Activated CD8-positive, alpha-beta T cell treated with anti-CD3 and anti-CD28 coated beads, Interleukin-2, amount 10 ng/mL, durations not matched to agents 7 days and 5 days (primary cell): ENCODE measurements at regions of chr11 and their contacts with region 1.

Region 1: DNA sequence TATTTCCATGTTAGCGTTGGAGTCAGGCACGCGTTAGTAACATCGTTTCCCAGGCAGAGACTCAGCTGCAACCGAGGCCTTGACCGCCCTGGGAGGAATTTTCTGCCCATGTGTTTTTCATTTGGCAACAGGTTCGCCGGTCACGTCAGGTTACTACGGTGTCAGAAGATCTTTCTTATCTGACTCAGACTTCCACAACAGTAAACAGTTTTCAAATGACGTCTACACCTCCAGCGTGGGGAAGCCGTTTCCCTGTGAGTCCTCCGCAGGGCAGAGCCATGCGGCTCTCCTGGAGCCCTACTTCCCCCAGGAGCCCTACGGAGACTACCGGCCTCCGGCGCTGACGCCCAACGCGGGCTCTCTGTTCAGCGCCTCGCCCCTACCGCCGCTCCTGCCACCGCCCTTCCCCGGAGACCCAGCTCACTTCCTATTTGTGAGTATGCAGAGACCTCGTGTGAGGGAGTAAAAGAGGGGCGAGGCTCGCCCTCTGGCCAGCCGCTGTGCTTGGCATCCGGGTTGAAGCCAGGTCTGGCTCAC is 14.3 kb upstream of the POU2AF3 start:
- DNase-seq: no peak
- ATAC-seq: no peak
- H3K4me3 Mint-ChIP-seq: no peak overlapping the region
- H3K27ac Mint-ChIP-seq: no peak overlapping the region
- H3K4me1 Mint-ChIP-seq: no peaks in the 10 kb centered on the region
- H3K27me3 Mint-ChIP-seq: peaks cover 3% of the 10 kb centered on the region

Region 2: DNA sequence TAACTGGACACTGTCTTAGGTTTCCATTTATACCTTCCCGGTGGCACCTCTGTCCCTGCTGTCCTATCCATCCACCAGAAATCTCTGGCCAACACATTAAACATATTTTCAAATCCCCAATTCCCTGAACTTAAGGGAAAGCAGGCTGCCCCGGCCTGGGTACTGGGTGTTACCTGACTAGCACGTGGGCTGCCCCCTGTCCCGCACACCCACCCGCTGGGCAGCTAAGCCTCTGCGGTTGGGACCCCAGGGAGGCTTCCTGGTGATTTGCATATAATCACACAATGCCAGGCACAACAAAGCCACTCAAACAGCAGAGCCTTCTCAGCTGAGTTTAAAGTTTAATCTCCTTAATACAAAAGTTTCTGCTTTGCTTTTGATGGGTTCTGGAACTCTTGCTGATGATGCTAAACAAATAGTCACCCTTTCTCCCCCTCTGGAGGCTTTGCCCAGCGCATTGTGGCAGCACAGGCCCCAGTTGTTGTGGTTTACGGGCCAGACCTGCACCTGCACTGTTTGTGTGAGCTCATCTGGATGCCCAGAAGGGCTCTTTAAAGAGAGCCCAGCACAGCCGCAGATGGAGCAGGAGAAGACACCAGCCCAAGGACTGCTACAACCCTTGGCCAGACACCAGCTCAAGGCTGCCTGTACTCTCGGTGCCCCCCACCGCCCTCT is 155.0 kb after region 1 on chr11:
- CTCF ChIA-PET with region 1: interaction called, 13 read pairs
- POLR2A ChIA-PET with region 1: no interaction called
- DNase-seq: no peak
- ATAC-seq: no peak
- H3K4me3 Mint-ChIP-seq: no peak overlapping the region
- H3K27ac Mint-ChIP-seq: no peak overlapping the region
- H3K4me1 Mint-ChIP-seq: peaks cover 20% of the 10 kb centered on the region
- H3K27me3 Mint-ChIP-seq: peaks cover 2% of the 10 kb centered on the region

Region 3: DNA sequence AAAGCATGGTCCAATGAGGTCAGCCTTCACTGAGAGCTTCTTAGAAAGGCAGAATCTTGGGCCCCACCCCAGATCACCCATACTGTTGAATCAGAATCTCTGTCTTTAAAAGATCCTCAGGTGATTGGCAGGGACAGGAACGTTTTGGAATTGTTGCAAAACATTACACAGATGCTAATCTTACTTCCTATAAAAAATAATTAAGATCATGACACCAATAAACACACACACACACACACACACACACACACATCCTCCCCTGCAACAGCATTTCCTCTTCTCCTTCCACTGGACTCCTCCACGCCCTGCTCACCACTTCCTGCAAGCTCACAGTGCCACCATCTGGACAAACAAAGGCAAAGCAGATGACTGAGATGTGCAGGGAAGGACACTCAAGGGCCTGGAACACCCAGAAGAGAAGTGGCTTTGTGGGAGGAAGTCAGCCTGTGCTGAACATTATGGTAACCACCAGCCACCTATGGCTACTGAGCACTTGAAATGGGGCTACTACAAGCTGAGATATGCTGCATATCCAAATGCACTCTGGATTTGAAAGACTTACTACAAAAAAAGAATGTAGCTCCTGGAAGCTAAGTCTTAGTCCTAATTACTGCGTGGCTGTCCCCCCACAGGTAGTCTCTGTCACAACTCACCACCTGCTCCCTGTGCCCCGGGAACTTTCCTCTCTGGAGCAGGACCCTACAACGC is 162.5 kb after region 1 on chr11:
- CTCF ChIA-PET with region 1: interaction called, 51 read pairs
- POLR2A ChIA-PET with region 1: no interaction called
- DNase-seq: peak; percentile 89
- ATAC-seq: peak; percentile 99
- H3K4me3 Mint-ChIP-seq: no peak overlapping the region
- H3K27ac Mint-ChIP-seq: peak overlapping the region; percentile 48
- H3K4me1 Mint-ChIP-seq: peaks cover 17% of the 10 kb centered on the region
- H3K27me3 Mint-ChIP-seq: peaks cover 4% of the 10 kb centered on the region